ENCODE measurements at regions of chr6 and their contacts with region 1.

Region 1: GRCh38 chr6:74289884-74290283 is 593.9 kb downstream of the CD109 start:
- DNase-seq: no peak
- ATAC-seq: no peak
- H3K4me3 ChIP-seq: no peak overlapping the region
- H3K27ac ChIP-seq: no peak overlapping the region
- H3K4me1 ChIP-seq: peaks cover 0 to 8% (median 0%) of the 10 kb centered on the region in 9 donors
- H3K27me3 ChIP-seq: no peaks in the 10 kb centered on the region
- CTCF ChIP-seq: no peak

Region 2: DNA sequence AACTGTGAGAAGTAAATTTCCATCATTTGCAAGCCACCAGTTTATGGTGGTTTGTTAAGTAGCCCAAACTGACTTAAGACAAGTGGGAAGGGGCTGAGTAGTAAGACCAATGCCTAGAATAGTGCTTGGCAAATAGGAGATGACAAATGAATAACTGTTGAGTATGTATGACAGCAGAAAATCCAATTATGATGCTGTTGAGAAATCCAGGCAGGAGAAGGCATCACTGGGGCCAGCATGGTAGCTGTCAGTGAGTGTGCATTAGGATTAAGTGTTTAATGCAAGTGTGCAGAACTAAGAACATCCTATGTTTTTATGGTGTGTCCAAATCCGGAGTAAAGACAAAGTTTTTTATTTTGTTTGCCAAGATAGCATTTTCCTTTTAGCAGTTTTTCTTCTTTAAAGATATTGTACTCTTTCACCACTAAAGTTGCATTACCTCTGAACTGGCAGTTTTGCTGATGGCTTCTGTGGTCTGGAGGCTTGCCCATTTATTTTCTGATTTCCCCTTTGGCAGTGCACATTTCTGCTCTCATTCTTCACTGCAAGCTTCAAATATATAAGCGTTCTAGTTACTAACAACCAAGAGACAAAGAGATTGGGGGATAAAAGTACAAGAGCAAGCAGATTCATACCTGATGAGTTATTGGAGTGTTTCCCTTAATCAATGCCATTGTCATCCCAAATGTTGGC is 1378.3 kb before region 1 on chr6:
- intact Hi-C with region 1: loop called in 1 of 10 experiments (anchors 5 kb)
- DNase-seq: no peak
- ATAC-seq: no peak
- H3K4me3 ChIP-seq: no peak overlapping the region
- H3K27ac ChIP-seq: no peak overlapping the region
- H3K4me1 ChIP-seq: peaks cover 0 to 9% (median 0%) of the 10 kb centered on the region in 9 donors
- H3K27me3 ChIP-seq: no peaks in the 10 kb centered on the region
- CTCF ChIP-seq: no peak

Region 3: GRCh38 chr6:73888050-73888449 is 401.8 kb before region 1 on chr6:
- intact Hi-C with region 1: no loop called
- DNase-seq: no peak
- ATAC-seq: no peak
- H3K4me3 ChIP-seq: no peak overlapping the region
- H3K27ac ChIP-seq: no peak overlapping the region
- H3K4me1 ChIP-seq: peaks cover 0 to 4% (median 0%) of the 10 kb centered on the region in 9 donors
- H3K27me3 ChIP-seq: no peaks in the 10 kb centered on the region
- CTCF ChIP-seq: no peak

Measured in heart right ventricle (tissue), 16 donors.